ENCODE measurements at regions of chr6 and their contacts with region 1.

Region 1: DNA sequence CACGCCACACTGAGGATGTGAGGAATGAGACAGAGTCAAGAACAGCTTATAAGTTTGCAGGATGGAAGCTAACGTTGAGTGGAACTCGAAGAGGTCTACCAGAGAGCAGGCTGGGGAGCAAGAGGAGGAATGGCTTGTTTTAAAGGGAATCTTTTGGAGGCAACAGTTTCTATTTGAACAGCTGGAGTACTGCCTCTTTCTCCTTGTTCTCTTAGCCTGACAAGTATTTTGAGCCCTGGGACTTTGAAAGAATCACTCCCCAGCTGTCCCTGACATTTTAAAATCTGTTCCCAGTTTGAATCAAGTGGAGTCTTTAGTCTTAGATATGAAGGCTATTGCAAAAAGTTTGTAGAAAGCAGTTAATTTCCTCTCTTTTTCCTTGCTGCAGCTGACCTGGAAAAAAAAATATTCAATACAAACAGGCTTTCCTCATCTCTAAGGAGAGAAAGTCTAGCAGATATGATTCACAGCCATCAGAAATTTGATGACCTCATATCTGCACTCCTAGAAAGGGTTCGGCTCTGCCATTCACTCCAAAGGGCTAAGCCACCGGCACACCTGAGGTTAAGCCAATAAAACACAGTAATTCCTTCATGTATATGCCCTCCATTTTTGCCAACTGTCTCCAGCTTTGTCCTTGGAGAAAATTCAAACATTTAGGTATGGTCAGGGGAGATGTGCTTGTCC is 18.9 kb upstream of the LY86 start:
- H3K4me3 ChIP-seq: no peak overlapping the region
- H3K27ac ChIP-seq: no peak overlapping the region
- H3K4me1 ChIP-seq: 0 out of 2 replicates have a peak, but pooled peaks cover 3% of the 10 kb centered on the region
- CTCF ChIP-seq: no peak

Region 2: DNA sequence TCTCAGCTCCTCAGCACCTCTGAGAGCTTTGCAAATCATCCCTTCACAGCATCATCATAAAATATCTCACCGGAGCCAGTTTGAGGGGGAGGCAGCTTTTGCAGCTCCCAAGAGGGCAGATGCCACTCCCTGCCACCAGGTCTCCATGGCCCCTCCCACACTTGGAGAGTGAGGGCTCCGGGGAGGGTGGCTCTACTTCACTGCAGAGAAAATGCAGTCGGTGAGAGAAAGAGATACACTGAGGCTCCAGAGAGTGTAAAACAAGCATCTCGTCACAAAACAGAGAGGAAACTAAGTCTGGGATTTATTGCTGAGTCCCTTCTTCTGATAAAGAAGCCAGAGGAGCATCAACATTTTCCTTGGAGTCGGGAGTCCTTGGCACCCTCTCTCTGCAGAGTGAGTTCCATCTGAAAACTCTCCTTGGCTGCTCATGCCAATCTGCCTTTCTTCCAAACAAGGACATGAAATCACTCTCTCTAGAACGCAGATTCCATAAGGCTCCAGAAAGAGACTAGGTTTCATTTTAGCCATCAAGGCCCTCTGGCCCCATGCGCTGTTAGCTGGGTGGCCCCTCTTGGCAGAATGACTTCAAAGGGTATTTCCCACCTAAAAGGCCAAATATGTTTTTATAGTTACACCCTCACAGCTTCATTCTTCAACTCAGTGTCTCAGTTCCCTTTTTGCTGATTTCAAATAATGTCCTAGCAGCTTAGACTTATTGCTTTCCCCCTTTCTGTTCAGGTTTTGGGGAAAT is 178.6 kb before region 1 on chr6:
- CTCF ChIA-PET with region 1: no interaction called
- POLR2A ChIA-PET with region 1: no interaction called
- H3K4me3 ChIP-seq: no peak overlapping the region
- H3K27ac ChIP-seq: no peak overlapping the region
- H3K4me1 ChIP-seq: no peaks in the 10 kb centered on the region
- CTCF ChIP-seq: no peak

Region 3: DNA sequence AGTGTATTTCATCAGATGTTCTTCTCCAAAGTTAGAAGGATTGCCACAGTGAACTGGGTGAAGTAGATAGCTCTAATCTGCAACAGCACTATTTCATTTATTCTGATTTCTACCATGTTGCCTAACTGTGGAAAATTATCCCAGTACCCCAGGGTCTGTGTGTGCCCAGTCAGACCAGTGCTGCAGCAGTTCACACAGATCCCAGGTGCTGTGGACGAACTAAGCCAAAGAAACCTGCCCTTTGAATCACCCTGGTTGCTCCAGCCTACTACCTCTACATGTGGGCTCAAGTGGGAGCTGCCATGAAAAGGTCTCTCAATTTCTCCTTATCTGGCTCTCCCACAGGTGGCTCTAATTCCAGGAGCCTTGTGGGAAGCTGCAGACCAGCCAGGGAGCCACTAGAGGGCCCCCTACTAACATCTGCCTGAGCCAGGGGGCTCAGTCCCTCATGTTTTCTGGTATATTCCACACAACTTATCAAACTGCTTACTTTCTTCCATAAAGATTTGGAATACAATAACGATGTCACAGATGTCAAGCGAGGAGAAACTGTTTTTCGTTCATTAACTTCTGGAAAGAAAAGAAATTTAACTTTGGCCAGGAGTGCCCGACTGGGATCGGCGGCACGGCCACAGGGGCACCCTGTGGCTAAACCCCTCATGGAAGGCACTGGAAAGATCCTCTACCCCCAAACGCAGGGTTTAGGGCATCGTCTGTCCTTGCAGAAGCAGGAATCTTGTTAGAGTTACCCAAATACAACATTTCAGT is 12.7 kb before region 1 on chr6:
- CTCF ChIA-PET with region 1: interaction called, 28 read pairs
- POLR2A ChIA-PET with region 1: no interaction called
- H3K4me3 ChIP-seq: no peak overlapping the region
- H3K27ac ChIP-seq: no peak overlapping the region
- H3K4me1 ChIP-seq: no peaks in the 10 kb centered on the region
- CTCF ChIP-seq: peak; percentile 54